Panc1 (cell line): ENCODE measurements at regions of chr14 and their contacts with region 1.

Region 1: DNA sequence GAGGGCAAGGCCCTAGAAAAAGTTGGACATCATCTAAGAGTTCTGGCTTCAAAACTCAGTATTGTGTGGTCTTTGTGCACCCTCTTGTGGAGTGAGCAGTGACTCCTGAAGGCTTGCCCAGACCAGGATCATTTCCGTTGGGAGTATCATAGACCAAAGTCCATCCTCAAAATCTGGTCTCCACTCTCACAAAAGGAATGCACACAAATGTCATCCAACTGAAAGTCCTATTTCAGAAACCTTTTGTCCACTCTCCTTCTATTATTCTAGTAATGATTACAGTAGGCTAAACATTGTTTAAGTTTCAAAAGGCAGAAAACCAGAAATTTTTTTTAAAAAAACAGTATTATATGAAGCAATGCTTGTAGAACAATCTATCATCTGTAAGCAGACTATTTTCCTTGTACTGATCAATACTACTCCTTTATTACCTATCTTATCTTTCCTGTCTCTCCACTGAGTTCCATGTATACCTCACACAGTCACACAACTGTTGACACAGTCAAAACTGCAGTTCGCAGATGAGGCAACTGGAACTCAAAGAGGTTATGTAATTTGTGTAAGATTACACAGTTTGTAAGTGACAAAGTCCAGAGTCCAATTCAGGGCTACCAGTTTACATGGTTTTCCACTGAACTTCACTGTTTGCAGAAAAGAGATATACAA is 41.4 kb downstream of the COX16 start:
- DNase-seq: peak; percentile 12
- ATAC-seq: peak; percentile 87
- H3K4me3 ChIP-seq: no peak overlapping the region
- H3K27ac ChIP-seq: no peak overlapping the region
- H3K4me1 ChIP-seq: no peaks in the 10 kb centered on the region
- H3K27me3 ChIP-seq: no peaks in the 10 kb centered on the region
- CTCF ChIP-seq: peak; percentile 57

Region 2: GRCh38 chr14:69818757-69819191 is 499.3 kb before region 1 on chr14:
- CTCF ChIA-PET with region 1: no interaction called
- POLR2A ChIA-PET with region 1: no interaction called
- in situ Hi-C with region 1: no loop called
- intact Hi-C with region 1: loop called (anchors 10 kb)
- DNase-seq: peak; percentile 70
- ATAC-seq: peak; percentile 92
- H3K4me3 ChIP-seq: no peak overlapping the region
- H3K27ac ChIP-seq: no peak overlapping the region
- H3K4me1 ChIP-seq: no peaks in the 10 kb centered on the region
- H3K27me3 ChIP-seq: no peaks in the 10 kb centered on the region
- CTCF ChIP-seq: peak; percentile 81

Region 3: DNA sequence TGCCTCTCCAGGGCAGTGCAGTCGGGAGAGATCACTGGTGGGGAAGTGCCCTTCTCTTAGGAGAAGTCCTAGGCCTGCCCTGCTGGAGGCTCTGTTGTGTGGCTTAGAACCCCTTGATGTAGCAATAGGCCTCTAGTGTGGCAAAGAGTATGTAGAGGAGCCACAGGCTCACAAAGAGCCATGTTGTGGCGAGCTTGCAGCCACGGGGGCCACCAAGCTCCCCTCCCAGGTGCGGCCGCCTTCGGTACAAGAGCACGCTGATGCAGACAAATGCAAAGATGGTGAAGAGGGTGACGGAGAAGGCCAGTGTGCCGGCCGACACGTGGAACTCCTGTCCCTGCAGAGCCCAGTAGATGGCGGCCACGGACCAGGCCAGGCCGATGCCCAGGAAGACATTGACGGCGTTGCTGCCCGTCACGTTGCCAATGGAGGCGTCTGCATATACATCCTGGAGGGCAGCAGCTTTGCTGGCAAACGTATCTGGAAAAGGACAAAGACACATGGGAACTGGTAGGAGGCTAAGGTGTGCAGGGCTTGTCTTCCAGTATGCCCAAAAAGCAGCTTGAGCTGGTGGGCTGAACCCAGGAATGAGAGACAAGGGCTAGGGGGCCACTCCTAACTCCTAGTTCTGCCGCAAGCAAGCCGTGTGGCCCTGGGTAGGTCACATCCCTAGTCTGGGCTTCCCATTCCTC is 272.1 kb before region 1 on chr14:
- CTCF ChIA-PET with region 1: no interaction called
- POLR2A ChIA-PET with region 1: no interaction called
- in situ Hi-C with region 1: no loop called
- intact Hi-C with region 1: loop called (anchors 1 kb)
- DNase-seq: no peak
- ATAC-seq: peak; percentile 98
- H3K4me3 ChIP-seq: no peak overlapping the region
- H3K27ac ChIP-seq: no peak overlapping the region
- H3K4me1 ChIP-seq: no peaks in the 10 kb centered on the region
- H3K27me3 ChIP-seq: peaks cover 2% of the 10 kb centered on the region
- CTCF ChIP-seq: peak; percentile 85